Esophagus squamous epithelium (tissue), 5 donors: ENCODE measurements at regions of chr6 and their contacts with region 1.

Region 1: GRCh38 chr6:116971959-116972358 is 94.9 kb downstream of the RFX6 start:
- DNase-seq: no peak
- H3K4me3 ChIP-seq: no peak overlapping the region
- H3K27ac ChIP-seq: no peak overlapping the region
- H3K4me1 ChIP-seq: no peaks in the 10 kb centered on the region
- H3K27me3 ChIP-seq: peaks cover 0 to 5% (median 0%) of the 10 kb centered on the region in 4 donors
- CTCF ChIP-seq: peak; percentile 23 to 63 (median 46)
- POLR2A ChIP-seq: no peak

Region 2: GRCh38 chr6:116933485-116933884 is 38.5 kb before region 1 on chr6:
- intact Hi-C with region 1: no loop called
- DNase-seq: no peak
- H3K4me3 ChIP-seq: no peak overlapping the region
- H3K27ac ChIP-seq: no peak overlapping the region
- H3K4me1 ChIP-seq: no peaks in the 10 kb centered on the region
- H3K27me3 ChIP-seq: no peaks in the 10 kb centered on the region
- CTCF ChIP-seq: no peak
- POLR2A ChIP-seq: no peak

Region 3: GRCh38 chr6:117317261-117317660 is 345.3 kb after region 1 on chr6:
- intact Hi-C with region 1: loop called (anchors 10 kb)
- DNase-seq: no peak
- H3K4me3 ChIP-seq: no peak overlapping the region
- H3K27ac ChIP-seq: no peak overlapping the region
- H3K4me1 ChIP-seq: no peaks in the 10 kb centered on the region
- H3K27me3 ChIP-seq: no peaks in the 10 kb centered on the region
- CTCF ChIP-seq: peak in 3 of 6 experiments; percentile 28 to 57 (median 35)
- POLR2A ChIP-seq: no peak